Mammary epithelial cell (primary cell): ENCODE measurements at regions of chr11 and their contacts with region 1.

Region 1: GRCh38 chr11:125253795-125254525 is 89.4 kb downstream of the PKNOX2 start:
- DNase-seq: no peak
- H3K4me3 ChIP-seq: no peak overlapping the region
- H3K27ac ChIP-seq: no peak overlapping the region
- H3K4me1 ChIP-seq: no peaks in the 10 kb centered on the region
- H3K27me3 ChIP-seq: no peaks in the 10 kb centered on the region
- CTCF ChIP-seq: no peak

Region 2: DNA sequence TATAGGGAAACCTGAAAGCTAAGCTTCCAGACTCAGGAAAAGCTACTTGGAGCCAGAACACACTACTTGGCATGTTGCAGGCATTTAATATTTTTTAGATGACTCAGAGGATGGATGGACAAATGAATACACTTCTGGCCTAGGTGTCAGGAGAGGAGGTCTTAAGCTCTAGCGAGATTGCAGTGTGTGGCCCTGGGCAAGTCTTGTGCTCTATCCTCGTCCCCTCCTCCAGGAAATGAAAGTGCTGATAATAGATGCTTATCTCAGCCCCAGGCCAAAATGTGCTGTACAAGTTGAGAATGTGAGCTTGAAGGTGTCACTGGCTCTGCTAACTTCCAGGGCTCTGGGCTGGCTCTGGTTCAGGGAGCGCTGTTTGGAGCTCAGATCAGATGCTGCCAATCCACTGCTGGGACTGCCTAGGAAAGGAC is 46.8 kb after region 1 on chr11:
- CTCF ChIA-PET with region 1: no interaction called
- dilution Hi-C with region 1: loop called (anchors 5 kb)
- in situ Hi-C with region 1: no loop called
- intact Hi-C with region 1: no loop called
- DNase-seq: peak; percentile 82
- H3K4me3 ChIP-seq: no peak overlapping the region
- H3K27ac ChIP-seq: no peak overlapping the region
- H3K4me1 ChIP-seq: peaks cover 11% of the 10 kb centered on the region
- H3K27me3 ChIP-seq: no peaks in the 10 kb centered on the region
- CTCF ChIP-seq: no peak